Endothelial cell of umbilical vein (primary cell): ENCODE measurements at regions of chr20 and their contacts with region 1.

Region 1: DNA sequence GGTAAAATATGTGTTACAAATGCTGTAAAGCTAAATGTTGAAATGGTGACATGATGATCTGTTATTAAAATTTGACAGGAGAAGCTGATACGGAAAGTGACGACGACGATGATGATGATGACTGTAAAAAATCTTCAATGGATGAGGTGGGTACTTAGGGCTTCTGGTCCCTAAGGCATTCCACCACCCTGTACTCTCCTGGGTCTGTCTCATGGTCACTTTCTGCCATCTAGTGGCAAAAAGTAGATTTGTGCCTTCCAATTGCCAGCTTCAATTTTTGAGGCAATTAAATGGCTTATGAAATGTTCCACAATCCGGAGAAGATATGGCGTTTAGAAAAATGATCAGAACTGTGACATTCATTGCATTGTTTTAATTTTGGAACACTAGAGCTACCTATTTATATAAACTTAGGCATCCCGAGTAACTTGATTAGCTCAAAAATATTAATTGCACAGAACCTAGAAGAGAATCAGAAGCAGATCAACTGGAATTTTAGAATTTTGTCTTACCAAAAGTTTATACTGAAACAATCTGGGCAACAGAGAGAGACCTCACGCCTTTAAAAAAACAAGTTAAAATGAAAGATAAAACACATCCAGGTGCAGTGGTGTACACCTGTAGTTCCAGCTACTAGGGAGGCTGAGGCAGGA is 346.5 kb upstream of the PLCB4 start:
- DNase-seq: peak; percentile 83
- H3K4me3 ChIP-seq: no peak overlapping the region
- H3K27ac ChIP-seq: no peak overlapping the region
- H3K4me1 ChIP-seq: no peaks in the 10 kb centered on the region
- H3K27me3 ChIP-seq: no peaks in the 10 kb centered on the region
- CTCF ChIP-seq: peak; percentile 62
- POLR2A ChIP-seq: no peak

Region 2: GRCh38 chr20:7940341-7940740 is 782.1 kb before region 1 on chr20 and contains the start of gene HAO1:
- CTCF ChIA-PET with region 1: interaction called, 531 read pairs
- POLR2A ChIA-PET with region 1: interaction called, 5 read pairs
- dilution Hi-C with region 1: no loop called
- intact Hi-C with region 1: loop called (anchors 1 kb)
- DNase-seq: no peak
- H3K4me3 ChIP-seq: no peak within 1 kb of the TSS
- H3K27ac ChIP-seq: no peak within 1 kb of the TSS
- H3K4me1 ChIP-seq: peaks cover 10% of the 10 kb centered on the region
- H3K27me3 ChIP-seq: no peaks in the 10 kb centered on the region
- CTCF ChIP-seq: no peak
- POLR2A ChIP-seq: no peak
- total RNA-seq, gene HAO1: not detected in 2 replicates

Region 3: DNA sequence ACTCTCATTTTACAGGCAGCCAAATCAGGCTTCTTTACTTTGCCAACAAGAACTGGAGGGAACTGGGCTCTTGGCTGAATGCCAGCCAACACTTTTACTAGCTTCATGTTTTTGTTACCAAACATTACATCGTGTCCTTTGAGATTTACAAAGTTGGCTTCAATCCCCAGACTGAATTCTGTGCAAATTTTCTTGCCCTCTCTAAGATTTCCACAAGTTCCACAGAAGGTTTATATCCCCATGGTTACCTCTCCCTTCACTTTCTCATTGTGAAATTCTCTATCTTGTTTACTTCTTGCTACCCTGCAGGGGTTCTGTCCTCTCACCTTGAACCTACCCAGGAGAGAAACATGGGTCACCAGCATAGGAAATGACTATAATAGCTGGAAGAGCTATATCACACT is 628.0 kb before region 1 on chr20:
- CTCF ChIA-PET with region 1: interaction called, 13 read pairs
- POLR2A ChIA-PET with region 1: no interaction called
- dilution Hi-C with region 1: no loop called
- intact Hi-C with region 1: no loop called
- DNase-seq: peak; percentile 87
- H3K4me3 ChIP-seq: no peak overlapping the region
- H3K27ac ChIP-seq: peak overlapping the region; percentile 94
- H3K4me1 ChIP-seq: peaks cover 25% of the 10 kb centered on the region
- H3K27me3 ChIP-seq: no peaks in the 10 kb centered on the region
- CTCF ChIP-seq: no peak
- POLR2A ChIP-seq: no peak

Region 4: DNA sequence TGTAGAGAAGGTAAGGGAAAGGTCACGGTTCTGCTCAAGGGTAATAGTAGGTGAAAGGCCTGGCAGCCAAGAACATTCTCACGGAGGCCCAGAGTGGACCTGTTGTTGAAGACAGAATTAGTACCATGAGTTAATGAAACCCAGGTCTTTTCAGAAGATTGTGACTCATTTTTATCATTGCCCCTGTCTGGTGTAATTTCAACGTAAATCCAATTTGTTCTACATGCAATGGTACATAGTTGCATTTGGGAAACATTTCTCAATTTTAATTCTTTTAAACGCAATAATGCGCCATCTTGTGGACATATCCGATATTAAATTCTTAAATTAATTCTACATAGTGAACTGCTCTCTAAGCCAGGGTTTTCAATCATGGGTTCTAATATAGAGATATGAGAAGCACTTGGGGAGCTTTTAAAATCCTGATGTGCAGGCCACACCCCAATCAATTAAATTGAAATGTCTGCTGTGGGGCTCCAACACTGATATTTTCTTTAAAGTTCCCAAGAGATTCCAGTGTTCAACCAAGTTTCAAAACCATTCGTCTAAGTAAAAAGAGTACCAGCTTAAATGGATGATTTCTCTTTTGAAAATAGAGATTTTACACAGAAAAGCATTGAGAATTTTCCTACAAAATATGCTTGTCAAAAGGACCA is 332.9 kb before region 1 on chr20:
- CTCF ChIA-PET with region 1: interaction called, 75 read pairs
- POLR2A ChIA-PET with region 1: no interaction called
- dilution Hi-C with region 1: no loop called
- intact Hi-C with region 1: loop called (anchors 1 kb)
- DNase-seq: peak; percentile 61
- H3K4me3 ChIP-seq: no peak overlapping the region
- H3K27ac ChIP-seq: no peak overlapping the region
- H3K4me1 ChIP-seq: peaks cover 3% of the 10 kb centered on the region
- H3K27me3 ChIP-seq: no peaks in the 10 kb centered on the region
- CTCF ChIP-seq: peak; percentile 6 to 20
- POLR2A ChIP-seq: no peak

Region 5: GRCh38 chr20:8454137-8454712 is 268.2 kb before region 1 on chr20:
- CTCF ChIA-PET with region 1: interaction called, 7 read pairs
- POLR2A ChIA-PET with region 1: no interaction called
- dilution Hi-C with region 1: no loop called
- intact Hi-C with region 1: loop called (anchors 2 kb)
- DNase-seq: peak; percentile 80
- H3K4me3 ChIP-seq: no peak overlapping the region
- H3K27ac ChIP-seq: no peak overlapping the region
- H3K4me1 ChIP-seq: no peaks in the 10 kb centered on the region
- H3K27me3 ChIP-seq: no peaks in the 10 kb centered on the region
- CTCF ChIP-seq: peak; percentile 40 to 42
- POLR2A ChIP-seq: no peak

Region 6: DNA sequence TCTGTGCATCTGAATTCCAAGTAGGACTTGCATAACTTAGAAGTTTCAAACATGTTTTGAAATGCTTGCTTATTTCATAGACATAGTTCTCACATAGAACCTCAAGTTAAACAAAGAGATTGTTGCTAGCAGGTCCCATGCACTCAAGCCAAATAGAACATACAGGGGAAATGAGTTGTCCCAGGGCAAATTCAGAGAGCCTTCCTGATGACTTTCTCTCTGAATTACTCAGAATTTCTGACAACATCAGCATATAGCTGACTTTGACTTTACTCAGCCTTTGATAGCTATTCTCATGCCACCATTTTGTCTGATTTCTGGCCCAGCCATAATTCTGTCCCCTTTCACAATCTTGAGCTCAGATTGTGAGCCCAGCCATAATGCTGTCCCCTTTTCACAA is 13.3 kb after region 1 on chr20:
- CTCF ChIA-PET with region 1: interaction called, 16 read pairs
- POLR2A ChIA-PET with region 1: no interaction called
- dilution Hi-C with region 1: no loop called
- intact Hi-C with region 1: no loop called
- DNase-seq: peak; percentile 20
- H3K4me3 ChIP-seq: no peak overlapping the region
- H3K27ac ChIP-seq: no peak overlapping the region
- H3K4me1 ChIP-seq: no peaks in the 10 kb centered on the region
- H3K27me3 ChIP-seq: no peaks in the 10 kb centered on the region
- CTCF ChIP-seq: no peak
- POLR2A ChIP-seq: no peak